Activated B cell treated with CpG ODN at 0.5 μM for 24 hours (primary cell): ENCODE measurements at regions of chr12 and their contacts with region 1.

Region 1: GRCh38 chr12:76559400-76560085 is at the start of gene OSBPL8:
- DNase-seq: peak; percentile 96
- ATAC-seq: peak; percentile 79
- H3K4me3 Mint-ChIP-seq: peak within 1 kb of the TSS; percentile 94
- H3K27ac Mint-ChIP-seq: peak within 1 kb of the TSS; percentile 95
- H3K4me1 Mint-ChIP-seq: peaks cover 45% of the 10 kb centered on the region
- H3K27me3 Mint-ChIP-seq: no peaks in the 10 kb centered on the region
- CTCF ChIP-seq: no peak
- total RNA-seq, gene OSBPL8: 73.8 and 79.6 TPM in 2 replicates

Region 2: GRCh38 chr12:75511116-75512048 is 1048.2 kb before region 1 on chr12 and contains the start of gene KRR1:
- CTCF ChIA-PET with region 1: no interaction called
- POLR2A ChIA-PET with region 1: no interaction called
- intact Hi-C with region 1: loop called (anchors 2 kb)
- DNase-seq: peak; percentile 72
- ATAC-seq: peak; percentile 96
- H3K4me3 Mint-ChIP-seq: peak within 1 kb of the TSS; percentile 99
- H3K27ac Mint-ChIP-seq: peak within 1 kb of the TSS; percentile 99
- H3K4me1 Mint-ChIP-seq: peaks cover 27% of the 10 kb centered on the region
- H3K27me3 Mint-ChIP-seq: no peaks in the 10 kb centered on the region
- CTCF ChIP-seq: no peak
- total RNA-seq, gene KRR1: 75.0 and 85.1 TPM in 2 replicates

Region 3: DNA sequence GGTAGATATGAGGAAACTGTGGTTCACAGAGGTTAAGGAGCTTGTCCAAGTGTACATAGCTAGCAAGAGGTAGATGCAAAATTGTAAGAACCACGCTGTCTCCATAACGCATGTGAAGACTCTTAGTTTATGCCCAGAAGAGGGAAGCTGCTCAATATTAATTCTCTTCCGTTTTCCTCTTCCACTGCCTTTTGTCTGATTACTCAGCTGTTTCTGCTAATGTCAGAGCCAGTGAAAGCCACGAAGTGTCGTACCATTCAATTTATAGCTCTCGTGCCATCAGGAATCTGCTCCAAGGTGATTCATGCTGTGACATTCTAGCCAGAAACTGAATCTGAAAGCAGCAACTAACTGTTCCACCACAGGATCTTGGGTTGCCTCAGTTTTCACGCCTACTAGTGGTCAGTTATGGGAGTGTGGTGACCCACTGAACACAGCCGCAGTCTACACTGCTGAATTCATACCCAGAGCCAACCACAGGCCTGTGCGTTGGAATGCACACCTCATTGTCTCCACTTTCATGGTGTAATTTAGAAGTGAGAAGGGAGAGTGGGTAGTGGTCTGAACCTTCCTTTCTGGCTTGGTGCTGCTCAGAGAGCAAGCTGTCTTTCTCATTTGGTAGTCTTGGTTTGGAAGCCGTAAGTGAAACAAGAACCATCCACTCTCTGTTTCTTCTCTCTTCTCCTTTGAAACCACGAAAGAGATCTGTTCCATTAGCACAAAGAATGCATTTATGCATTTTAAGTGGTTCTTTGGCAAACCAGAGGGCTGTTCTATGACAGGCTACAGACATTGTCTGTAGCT is 400.8 kb before region 1 on chr12:
- CTCF ChIA-PET with region 1: interaction called, 5 read pairs
- POLR2A ChIA-PET with region 1: interaction called, 8 read pairs
- intact Hi-C with region 1: loop called (anchors 10 kb)
- DNase-seq: peak; percentile 33
- ATAC-seq: peak; percentile 99
- H3K4me3 Mint-ChIP-seq: peak overlapping the region; percentile 82
- H3K27ac Mint-ChIP-seq: peak overlapping the region; percentile 88
- H3K4me1 Mint-ChIP-seq: peaks cover 20% of the 10 kb centered on the region
- H3K27me3 Mint-ChIP-seq: no peaks in the 10 kb centered on the region
- CTCF ChIP-seq: no peak

Region 4: DNA sequence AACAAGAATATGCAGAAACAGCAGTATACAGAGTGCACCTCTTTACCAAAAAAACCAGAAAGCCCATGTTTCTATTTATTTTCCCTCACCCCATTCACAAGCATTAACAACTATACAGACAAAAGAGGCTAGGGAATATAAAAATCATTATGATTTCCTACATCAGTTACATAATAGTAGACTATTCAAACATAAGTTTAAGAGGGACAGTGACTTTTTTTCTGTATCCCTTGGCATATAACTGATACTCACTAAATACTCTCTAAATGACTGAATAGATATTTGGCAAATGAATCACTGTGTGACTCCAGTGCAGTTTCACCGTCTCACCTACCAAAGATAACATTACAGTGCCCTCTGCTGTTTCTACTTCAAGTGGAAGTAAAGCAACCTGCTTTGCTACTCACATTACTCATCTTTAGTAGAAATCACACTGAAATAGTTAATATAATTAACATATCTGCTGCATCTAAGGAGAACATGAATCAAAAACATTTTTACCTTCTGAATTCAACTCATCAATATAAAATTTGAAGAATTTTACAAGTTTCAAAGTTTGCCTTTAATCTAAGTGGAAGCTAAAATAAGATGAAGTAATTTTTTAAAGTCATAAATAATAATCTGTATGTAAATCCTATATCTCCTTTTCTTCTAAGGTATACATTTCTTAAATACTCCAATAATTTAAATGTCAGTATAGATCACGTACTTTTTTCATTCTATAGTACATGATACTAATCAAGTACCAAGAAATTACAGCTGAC is 103.8 kb before region 1 on chr12:
- CTCF ChIA-PET with region 1: interaction called, 7 read pairs
- POLR2A ChIA-PET with region 1: interaction called, 5 read pairs
- intact Hi-C with region 1: loop called (anchors 1 kb)
- DNase-seq: no peak
- ATAC-seq: peak; percentile 62
- H3K4me3 Mint-ChIP-seq: no peak overlapping the region
- H3K27ac Mint-ChIP-seq: no peak overlapping the region
- H3K4me1 Mint-ChIP-seq: peaks cover 9% of the 10 kb centered on the region
- H3K27me3 Mint-ChIP-seq: no peaks in the 10 kb centered on the region
- CTCF ChIP-seq: no peak

Region 5: DNA sequence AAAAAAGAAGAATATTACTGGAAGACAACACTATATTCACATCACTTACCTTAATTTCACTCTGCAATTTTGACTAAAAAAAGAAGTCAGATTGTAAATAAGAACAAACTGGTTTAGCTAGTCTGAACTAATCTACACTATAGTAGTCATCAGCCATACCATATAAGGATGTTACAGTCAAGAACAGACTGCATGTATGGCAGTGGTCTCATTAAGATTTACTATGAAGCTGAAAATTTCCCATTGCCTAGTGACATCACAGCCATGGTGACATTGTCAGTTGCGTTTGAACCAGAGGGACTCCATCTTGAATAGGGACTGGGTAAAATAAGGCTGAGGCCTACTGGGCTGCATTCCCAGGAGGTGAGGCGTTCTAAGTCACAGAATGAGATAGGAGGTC is 51.4 kb before region 1 on chr12:
- CTCF ChIA-PET with region 1: interaction called, 3 read pairs
- POLR2A ChIA-PET with region 1: interaction called, 23 read pairs
- intact Hi-C with region 1: loop called (anchors 1 kb)
- DNase-seq: no peak
- ATAC-seq: no peak
- H3K4me3 Mint-ChIP-seq: no peak overlapping the region
- H3K27ac Mint-ChIP-seq: no peak overlapping the region
- H3K4me1 Mint-ChIP-seq: peaks cover 48% of the 10 kb centered on the region
- H3K27me3 Mint-ChIP-seq: no peaks in the 10 kb centered on the region
- CTCF ChIP-seq: no peak

Region 6: GRCh38 chr12:76666290-76666835 is 106.8 kb after region 1 on chr12:
- CTCF ChIA-PET with region 1: no interaction called
- POLR2A ChIA-PET with region 1: no interaction called
- intact Hi-C with region 1: no loop called
- DNase-seq: no peak
- ATAC-seq: no peak
- H3K4me3 Mint-ChIP-seq: no peak overlapping the region
- H3K27ac Mint-ChIP-seq: no peak overlapping the region
- H3K4me1 Mint-ChIP-seq: peaks cover 10% of the 10 kb centered on the region
- H3K27me3 Mint-ChIP-seq: no peaks in the 10 kb centered on the region
- CTCF ChIP-seq: no peak

Region 7: GRCh38 chr12:76763743-76764675 is 204.5 kb after region 1 on chr12 and contains the start of gene ZDHHC17:
- CTCF ChIA-PET with region 1: no interaction called
- POLR2A ChIA-PET with region 1: interaction called, 9 read pairs
- intact Hi-C with region 1: loop called (anchors 1 kb)
- DNase-seq: peak; percentile 96
- ATAC-seq: peak; percentile 87
- H3K4me3 Mint-ChIP-seq: peak within 1 kb of the TSS; percentile 97
- H3K27ac Mint-ChIP-seq: peak within 1 kb of the TSS; percentile 96
- H3K4me1 Mint-ChIP-seq: peaks cover 44% of the 10 kb centered on the region
- H3K27me3 Mint-ChIP-seq: no peaks in the 10 kb centered on the region
- CTCF ChIP-seq: no peak
- total RNA-seq, gene ZDHHC17: 51.8 and 70.8 TPM in 2 replicates